ENCODE measurements at regions of chr4 and their contacts with region 1.

Region 1: GRCh38 chr4:88211473-88212252 is 53.2 kb upstream of the ABCG2 start:
- DNase-seq: peak in 2 of 10 donors; percentile 22 to 58

Region 2: DNA sequence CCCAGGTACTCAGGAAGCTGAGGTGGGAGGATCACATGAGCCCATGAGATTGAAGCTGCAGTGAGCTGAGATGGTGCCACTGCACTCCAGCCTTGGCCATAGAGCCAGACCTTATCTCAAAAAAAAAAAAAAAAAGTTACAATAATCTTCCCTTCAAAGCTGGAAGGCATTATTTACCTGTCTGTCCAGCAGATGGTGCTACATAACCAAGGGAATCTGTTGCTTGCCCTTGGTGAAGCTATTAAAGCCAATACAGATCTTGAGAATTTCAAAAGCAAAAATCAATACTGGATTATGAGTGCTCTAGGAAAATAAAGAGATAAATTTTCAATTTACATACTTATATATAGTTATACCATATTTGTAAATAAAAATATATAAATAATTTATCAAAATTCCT is 178.4 kb before region 1 on chr4:
- intact Hi-C with region 1: loop called (anchors 5 kb)
- DNase-seq: no peak

Region 3: DNA sequence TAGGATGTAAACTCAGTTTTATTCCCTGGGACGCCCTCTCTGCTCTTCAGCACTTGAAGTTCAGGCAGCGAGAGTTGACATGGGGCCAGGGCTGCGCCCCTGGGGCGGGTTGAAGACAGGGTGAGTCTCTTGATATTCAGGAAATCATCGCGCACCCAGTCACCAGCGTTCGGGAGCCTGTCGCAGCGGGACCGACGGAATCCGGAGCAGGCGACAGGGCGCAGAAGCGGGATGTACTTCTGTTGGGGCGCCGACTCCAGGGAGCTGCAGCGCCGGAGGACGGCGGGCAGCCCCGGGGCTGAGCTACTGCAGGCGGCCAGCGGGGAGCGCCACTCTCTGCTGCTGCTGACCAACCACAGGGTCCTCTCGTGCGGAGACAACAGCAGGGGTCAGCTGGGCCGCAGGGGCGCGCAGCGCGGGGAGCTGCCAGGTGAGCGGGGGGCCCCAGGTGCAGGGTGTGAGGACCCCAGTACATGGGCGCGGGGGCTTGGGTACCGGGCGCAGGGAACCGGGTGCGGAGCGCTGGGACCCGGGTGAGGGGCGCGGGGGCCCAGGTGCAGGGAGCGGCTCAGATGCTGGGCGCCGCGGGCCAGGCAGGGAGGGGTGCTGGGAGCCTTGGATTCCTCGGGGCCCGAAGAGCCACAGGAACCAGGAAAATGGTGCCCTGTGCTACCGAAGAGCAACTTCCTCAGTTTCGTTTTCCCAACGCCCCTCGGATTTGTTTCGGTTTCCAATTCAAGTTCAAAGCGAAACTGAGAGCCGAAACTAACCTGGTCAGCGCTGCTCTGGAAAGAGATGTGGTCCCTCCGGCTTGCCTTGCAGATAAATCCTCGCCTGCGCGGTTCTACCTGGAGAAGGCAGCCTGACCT is 167.3 kb after region 1 on chr4 and contains the start of gene HERC6:
- intact Hi-C with region 1: loop called (anchors 10 kb)
- DNase-seq: peak; percentile 61 to 96 (median 76)

Region 4: GRCh38 chr4:88737307-88737941 is 525.8 kb after region 1 on chr4:
- intact Hi-C with region 1: no loop called
- DNase-seq: peak in 1 of 10 donors; percentile 35